Left cardiac atrium (tissue), 4 donors: ENCODE measurements at regions of chr15 and their contacts with region 1.

Region 1: DNA sequence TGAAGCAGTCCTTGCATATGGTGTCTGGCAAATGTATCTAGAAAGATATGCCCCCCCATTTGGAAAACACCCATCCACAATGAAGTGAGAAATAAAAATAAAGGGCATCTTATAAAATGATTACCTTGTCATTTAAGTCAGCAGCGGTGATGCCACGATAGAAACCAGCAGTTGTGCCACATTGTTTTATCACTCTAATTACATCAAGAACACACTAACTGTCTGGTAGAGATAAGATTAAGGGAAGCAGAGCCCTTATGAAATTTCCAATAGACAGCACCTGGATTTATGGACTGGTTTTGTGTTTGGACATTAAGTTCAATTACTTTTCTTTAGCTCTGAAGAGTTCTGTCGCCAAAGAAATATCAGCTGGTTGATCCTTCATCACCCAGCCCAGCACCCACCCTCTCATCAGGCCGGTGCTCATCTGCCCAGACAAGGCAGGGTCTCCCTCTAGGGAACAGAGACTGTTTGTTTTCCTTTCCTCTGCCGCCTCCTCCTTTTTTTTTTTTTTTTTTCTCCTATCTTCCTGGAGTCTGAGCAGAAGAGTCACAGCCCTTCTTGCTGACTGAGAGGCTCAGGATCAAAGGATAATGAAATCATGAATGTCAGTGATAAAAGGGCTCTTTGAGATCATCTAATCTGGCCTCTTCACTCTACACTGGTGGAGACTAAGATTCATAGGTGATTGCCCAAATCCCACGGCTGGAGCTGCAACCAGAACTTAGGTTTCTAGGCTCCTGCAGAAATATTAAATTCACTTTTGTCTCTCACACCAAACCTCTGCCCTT is 464.1 kb downstream of the NTRK3 start:
- DNase-seq: no peak
- ATAC-seq: no peak

Region 2: GRCh38 chr15:87604857-87605446 is 187.5 kb before region 1 on chr15:
- intact Hi-C with region 1: no loop called
- DNase-seq: no peak
- ATAC-seq: no peak

Region 3: GRCh38 chr15:87829332-87830050 is 37.0 kb after region 1 on chr15:
- intact Hi-C with region 1: loop called in 1 of 2 experiments (anchors 5 kb)
- DNase-seq: peak; percentile 32
- ATAC-seq: peak; percentile 85 to 91

Region 4: GRCh38 chr15:87902772-87903426 is 110.5 kb after region 1 on chr15:
- intact Hi-C with region 1: no loop called
- DNase-seq: no peak
- ATAC-seq: peak; percentile 23 to 24

Region 5: GRCh38 chr15:88069561-88069960 is 277.1 kb after region 1 on chr15:
- intact Hi-C with region 1: no loop called
- DNase-seq: no peak
- ATAC-seq: no peak